Head of caudate nucleus (tissue), 42 donors: ENCODE measurements at regions of chr3 and their contacts with region 1.

Region 1: DNA sequence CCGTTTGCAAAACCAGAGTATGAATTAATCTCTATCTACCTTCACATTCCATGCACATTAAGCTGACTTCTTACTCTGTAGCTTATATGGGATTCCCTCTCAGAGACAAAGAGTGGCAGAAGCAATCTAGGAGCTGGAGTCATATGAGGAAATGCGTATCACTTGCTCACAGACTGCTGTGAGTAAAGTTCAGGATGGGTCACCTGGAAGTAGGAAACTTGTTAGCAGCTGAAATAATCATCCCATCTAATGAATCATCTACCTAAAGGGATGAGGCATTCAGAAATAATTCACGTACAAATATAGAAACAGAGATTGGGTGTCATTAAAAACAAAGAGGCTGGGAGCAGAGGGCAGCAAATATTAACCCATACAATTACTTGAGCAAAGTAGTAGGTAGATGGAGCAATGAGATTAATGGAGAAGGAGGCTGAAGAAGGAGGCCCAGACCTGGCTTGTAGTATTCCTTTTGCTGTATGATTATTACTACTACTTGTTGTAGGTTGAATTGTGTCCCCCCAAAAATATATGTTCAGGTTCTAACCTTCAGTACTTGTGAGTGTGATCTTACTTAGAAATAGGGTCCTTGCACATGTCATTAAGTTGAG is 866.3 kb downstream of the ROBO2 start:
- DNase-seq: no peak

Region 2: GRCh38 chr3:77686560-77686959 is 219.6 kb before region 1 on chr3:
- intact Hi-C with region 1: no loop called
- DNase-seq: no peak

Region 3: DNA sequence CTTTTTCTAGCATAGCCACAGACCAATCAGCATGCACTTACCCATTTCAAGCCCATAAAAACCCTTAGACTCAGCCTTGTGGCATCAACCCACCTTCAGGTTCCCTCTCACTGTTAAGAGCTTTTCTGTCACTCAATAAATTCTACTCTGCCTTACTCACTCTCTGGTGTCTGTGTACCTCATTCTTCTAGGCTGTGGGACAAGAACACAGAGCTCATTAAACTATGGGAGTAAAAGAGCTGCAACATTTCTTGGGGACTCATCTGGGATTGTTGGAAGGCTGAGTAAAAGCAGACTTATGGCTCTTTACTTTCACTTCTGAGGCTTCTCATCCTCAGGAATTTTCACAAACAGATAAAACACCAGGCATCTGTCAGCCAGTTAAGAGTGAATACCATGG is 13.0 kb after region 1 on chr3:
- intact Hi-C with region 1: loop called (anchors 1 kb)
- DNase-seq: no peak